ENCODE measurements at regions of chr10 and their contacts with region 1.

Region 1: DNA sequence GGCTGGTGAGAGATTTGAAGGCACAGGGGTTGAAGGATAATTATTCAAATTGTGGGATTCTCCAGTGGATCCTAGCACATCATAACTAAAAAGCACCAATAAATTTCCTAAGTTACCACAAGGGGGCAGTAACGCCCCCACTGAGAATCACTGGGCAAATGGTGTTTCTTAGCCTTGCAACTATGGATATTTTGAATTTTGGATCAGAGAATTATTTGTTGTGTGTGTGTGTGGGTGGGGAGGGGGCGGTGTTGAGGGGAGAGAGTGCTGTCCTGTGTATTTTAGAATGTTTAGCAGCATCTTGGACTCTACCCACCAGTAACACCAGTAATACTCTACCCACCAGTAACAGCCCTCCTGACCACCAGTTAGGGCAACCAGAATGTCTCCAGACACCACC is 63.3 kb upstream of the PRKG1 start:
- DNase-seq: no peak
- H3K4me3 Mint-ChIP-seq: no peak overlapping the region
- H3K27ac Mint-ChIP-seq: no peak overlapping the region
- H3K4me1 Mint-ChIP-seq: no peaks in the 10 kb centered on the region
- H3K27me3 Mint-ChIP-seq: no peaks in the 10 kb centered on the region

Region 2: DNA sequence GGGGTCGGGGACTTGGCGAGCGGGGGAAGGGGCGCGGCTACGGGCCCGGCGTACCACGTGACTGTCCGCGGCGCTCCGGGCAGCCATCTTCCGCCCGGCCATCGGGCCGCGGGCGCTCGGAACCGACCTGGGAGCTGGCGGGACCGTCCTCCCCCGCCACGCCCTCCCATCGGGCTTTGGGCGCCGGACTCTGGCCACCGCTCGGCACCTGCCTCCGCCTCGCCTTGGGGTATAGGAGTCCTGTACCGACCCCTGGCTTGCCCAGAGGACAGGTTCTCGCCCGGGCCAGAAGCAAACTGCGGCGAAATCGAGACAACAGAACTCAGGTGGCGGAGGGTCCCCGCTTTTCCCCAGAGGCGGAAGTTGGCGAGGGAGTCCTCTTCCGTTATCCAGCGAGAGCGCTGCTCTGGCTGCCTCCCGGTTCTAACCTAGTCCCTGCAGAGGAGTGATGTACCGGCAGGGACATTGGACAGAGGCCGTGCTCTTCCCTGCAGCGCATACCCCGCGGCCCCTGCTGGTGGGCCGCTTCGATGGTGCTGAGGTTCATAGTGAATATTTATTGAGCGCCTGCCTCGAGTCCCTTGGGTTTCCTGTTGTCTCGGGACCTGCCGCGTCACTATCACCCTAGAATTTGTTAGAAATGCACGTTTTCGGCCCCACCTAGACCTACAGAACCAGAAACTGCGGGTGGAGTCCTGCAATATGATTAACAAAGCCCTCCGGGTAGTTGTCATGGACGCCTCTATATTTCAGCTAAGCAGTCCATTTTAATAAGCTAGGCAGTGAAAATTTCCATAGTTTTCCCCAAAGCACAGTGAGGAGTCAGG is 385.9 kb before region 1 on chr10:
- intact Hi-C with region 1: no loop called
- DNase-seq: no peak
- H3K4me3 Mint-ChIP-seq: peak overlapping the region; percentile 89
- H3K27ac Mint-ChIP-seq: peak overlapping the region; percentile 88
- H3K4me1 Mint-ChIP-seq: peaks cover 43% of the 10 kb centered on the region
- H3K27me3 Mint-ChIP-seq: no peaks in the 10 kb centered on the region

Region 3: DNA sequence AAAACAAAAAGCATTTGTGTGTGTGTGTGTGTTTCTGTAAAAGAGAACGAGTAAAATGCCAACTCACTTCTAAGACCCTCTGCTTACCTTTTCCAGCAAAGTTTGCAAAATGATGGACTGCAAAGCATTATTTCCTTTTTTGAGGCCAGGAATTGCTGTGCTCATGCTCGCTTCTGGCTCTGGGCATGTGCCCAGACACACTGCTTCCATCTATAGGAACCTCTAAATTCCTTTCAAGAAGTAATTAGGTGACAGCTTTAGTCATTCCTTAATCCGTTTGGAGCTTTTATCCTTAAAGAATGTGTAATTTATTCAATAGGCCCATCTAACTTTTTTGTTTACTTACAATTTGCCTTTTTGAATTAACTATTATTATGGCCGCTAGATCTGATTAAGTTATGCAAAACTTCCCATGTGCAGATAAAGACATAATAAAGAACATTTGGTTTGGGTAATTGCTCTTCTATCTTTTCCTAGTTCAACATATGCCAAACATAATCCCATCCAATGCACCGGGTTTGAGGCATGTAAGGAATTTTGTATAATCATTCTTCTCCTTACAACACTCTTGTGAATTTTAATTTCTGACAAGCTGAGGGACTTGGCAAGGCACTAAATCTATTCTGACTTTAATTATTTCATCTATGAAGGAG is 160.3 kb before region 1 on chr10:
- intact Hi-C with region 1: no loop called
- DNase-seq: no peak
- H3K4me3 Mint-ChIP-seq: no peak overlapping the region
- H3K27ac Mint-ChIP-seq: no peak overlapping the region
- H3K4me1 Mint-ChIP-seq: no peaks in the 10 kb centered on the region
- H3K27me3 Mint-ChIP-seq: peaks cover 5% of the 10 kb centered on the region

Region 4: DNA sequence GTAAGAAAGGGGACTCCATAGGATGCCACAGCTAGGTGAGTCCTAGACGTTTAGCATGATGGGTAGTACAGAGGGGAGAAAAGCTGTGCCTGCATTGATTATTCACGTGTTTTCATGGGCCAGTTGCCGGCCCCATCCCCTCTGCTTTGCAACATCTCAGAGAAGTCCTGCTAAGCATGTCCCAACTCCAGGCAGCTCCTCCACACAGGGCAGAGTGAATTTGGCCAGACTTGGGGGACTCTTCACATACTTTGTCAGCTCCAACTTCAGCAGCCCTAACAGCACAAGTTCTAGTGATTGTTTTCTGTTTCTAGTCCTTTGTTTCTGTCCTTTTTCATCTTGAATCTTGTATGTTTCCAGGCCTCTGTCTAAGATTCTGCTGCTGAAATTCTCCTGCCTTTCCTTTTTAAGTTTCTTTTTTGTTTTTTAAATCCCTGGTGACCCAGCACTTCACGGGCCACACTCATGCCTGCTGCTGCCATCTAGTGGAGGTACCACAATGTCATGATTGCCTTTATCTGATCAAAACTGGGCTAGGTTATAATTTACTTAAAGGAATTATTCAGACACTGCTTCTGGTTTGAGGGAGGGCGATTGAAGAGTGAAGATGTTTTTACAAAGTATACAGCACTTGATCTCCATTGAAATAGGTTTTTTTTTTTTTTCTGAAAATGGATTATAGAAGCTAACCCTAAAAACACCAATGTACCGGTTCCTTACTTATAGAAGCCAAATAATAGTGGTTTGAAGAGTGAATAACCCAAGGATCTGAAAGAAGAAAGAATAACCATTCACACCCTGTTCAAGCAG is 411.5 kb after region 1 on chr10:
- intact Hi-C with region 1: loop called (anchors 2 kb)
- DNase-seq: peak; percentile 3
- H3K4me3 Mint-ChIP-seq: no peak overlapping the region
- H3K27ac Mint-ChIP-seq: no peak overlapping the region
- H3K4me1 Mint-ChIP-seq: no peaks in the 10 kb centered on the region
- H3K27me3 Mint-ChIP-seq: peaks cover 8% of the 10 kb centered on the region

Region 5: DNA sequence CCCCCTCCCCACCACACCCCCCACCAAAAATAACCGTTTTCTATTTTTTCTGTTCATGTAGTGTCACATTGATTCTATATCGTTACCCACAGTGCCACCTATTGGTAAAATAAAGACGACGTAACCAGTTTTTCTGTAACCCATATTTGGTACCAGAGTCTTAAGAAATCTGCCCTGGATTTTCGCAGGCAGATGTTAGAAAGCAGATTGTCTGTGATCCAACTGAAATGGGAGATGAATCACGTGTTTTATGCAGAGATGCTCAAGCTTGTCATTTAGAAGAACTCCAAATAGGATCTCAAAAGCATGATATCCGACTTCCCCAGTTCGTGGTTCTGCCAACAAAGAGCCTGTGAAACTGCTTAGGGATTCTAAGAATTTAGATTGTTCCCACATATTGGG is 949.5 kb after region 1 on chr10:
- intact Hi-C with region 1: loop called (anchors 1 kb)
- DNase-seq: no peak
- H3K4me3 Mint-ChIP-seq: no peak overlapping the region
- H3K27ac Mint-ChIP-seq: no peak overlapping the region
- H3K4me1 Mint-ChIP-seq: no peaks in the 10 kb centered on the region
- H3K27me3 Mint-ChIP-seq: peaks cover 7% of the 10 kb centered on the region

Region 6: DNA sequence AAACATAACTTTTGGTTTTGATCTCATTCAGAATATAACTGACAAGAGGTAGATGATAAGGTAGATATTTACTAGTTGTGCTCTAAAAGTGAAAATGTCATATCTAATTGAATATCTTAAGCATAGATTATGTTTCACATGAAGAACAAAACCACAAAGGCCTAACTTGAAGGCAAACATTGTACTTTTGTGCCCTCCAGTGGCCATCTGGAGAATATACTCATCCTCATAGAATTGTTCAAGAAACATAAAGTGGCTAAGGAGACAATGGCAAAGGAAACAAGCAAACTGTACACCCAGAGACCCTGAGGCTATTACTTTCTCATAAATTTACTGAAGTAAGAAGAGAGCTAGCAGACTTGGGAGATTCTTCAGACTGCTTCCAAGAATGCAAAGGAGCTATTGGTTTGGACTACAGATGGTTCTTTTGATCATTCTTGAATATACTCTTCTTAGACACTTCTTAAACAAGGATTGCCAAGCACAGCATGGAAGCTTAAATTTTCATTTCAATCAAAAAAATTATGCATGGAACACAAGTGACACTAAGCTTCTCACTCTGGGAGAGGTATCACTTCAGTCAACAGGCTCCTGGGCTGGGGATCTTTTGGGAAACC is 1204.9 kb after region 1 on chr10:
- intact Hi-C with region 1: loop called (anchors 1 kb)
- DNase-seq: peak; percentile 14
- H3K4me3 Mint-ChIP-seq: no peak overlapping the region
- H3K27ac Mint-ChIP-seq: no peak overlapping the region
- H3K4me1 Mint-ChIP-seq: no peaks in the 10 kb centered on the region
- H3K27me3 Mint-ChIP-seq: peaks cover 3% of the 10 kb centered on the region

Measured in activated T-helper 1 cell treated with anti-CD3 and anti-CD28 coated beads, Interleukin-12 subunit alpha, Interleukin-12 subunit beta, Interleukin-2, Interleukin-4 antibody, amounts not matched to agents 30 ng/mL and 10 ng/mL and 1 ng/mL, durations not matched to agents 14 hours and 24 hours and 36 hours (primary cell).